Heart right ventricle (tissue), 16 donors: ENCODE measurements at regions of chr2 and their contacts with region 1.

Region 1: GRCh38 chr2:78476619-78477229 is 548.8 kb upstream of the REG3G start:
- DNase-seq: no peak
- ATAC-seq: no peak
- H3K4me3 ChIP-seq: no peak overlapping the region
- H3K27ac ChIP-seq: no peak overlapping the region
- H3K4me1 ChIP-seq: no peaks in the 10 kb centered on the region
- H3K27me3 ChIP-seq: no peaks in the 10 kb centered on the region
- CTCF ChIP-seq: no peak

Region 2: DNA sequence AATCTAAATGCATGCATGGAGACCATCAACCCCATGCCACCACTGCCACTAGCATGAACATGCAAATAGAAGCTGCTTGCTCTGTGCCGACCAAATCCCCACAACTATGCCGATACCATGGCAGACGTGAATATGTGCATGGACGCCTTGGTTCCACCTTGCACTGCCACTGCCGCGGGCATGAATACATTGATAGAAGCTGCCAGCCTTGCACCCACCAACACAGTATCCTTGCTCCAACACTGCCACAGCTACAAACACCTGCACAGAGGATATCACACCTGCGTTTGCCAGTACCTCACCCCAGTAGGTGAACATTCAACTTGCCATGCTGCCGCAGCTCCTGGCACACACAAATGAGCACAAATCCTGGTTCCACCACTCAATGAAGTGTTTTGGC is 21.4 kb after region 1 on chr2:
- intact Hi-C with region 1: loop called in 1 of 10 experiments (anchors 2 kb)
- DNase-seq: no peak
- ATAC-seq: no peak
- H3K4me3 ChIP-seq: no peak overlapping the region
- H3K27ac ChIP-seq: no peak overlapping the region
- H3K4me1 ChIP-seq: no peaks in the 10 kb centered on the region
- H3K27me3 ChIP-seq: no peaks in the 10 kb centered on the region
- CTCF ChIP-seq: no peak

Region 3: GRCh38 chr2:78592491-78592890 is 115.8 kb after region 1 on chr2:
- intact Hi-C with region 1: no loop called
- DNase-seq: no peak
- ATAC-seq: no peak
- H3K4me3 ChIP-seq: no peak overlapping the region
- H3K27ac ChIP-seq: no peak overlapping the region
- H3K4me1 ChIP-seq: no peaks in the 10 kb centered on the region
- H3K27me3 ChIP-seq: no peaks in the 10 kb centered on the region
- CTCF ChIP-seq: no peak

Region 4: DNA sequence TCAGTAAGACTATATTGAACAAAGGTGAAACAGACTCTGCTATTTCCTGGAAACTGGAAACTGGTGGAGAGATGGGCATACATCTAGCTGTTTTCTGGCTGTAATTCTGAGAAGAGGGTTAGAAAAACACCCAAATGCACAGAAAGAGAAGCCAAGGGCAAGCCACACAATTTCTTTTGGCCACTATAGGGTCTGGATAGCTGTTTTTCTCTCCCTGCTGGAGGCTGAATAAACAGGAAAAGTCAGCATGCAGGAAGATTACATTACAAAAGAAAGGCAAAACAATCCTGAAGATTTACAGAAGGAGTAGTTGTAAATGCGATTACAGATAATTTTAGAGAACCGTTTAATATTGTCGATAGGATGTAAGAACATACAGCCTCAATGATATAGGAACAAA is 362.5 kb after region 1 on chr2:
- intact Hi-C with region 1: no loop called
- DNase-seq: no peak
- ATAC-seq: no peak
- H3K4me3 ChIP-seq: no peak overlapping the region
- H3K27ac ChIP-seq: no peak overlapping the region
- H3K4me1 ChIP-seq: no peaks in the 10 kb centered on the region
- H3K27me3 ChIP-seq: no peaks in the 10 kb centered on the region
- CTCF ChIP-seq: no peak